Activated B cell treated with CpG ODN at 0.5 μM for 24 hours (primary cell): ENCODE measurements at regions of chr11 and their contacts with region 1.

Region 1: GRCh38 chr11:71977743-71978418 is 20.8 kb upstream of the IL18BP start:
- DNase-seq: no peak
- ATAC-seq: peak; percentile 96
- H3K4me3 Mint-ChIP-seq: no peak overlapping the region
- H3K27ac Mint-ChIP-seq: peak overlapping the region; percentile 91
- H3K4me1 Mint-ChIP-seq: peaks cover 16% of the 10 kb centered on the region
- H3K27me3 Mint-ChIP-seq: no peaks in the 10 kb centered on the region
- CTCF ChIP-seq: peak; percentile 26

Region 2: GRCh38 chr11:71962428-71963038 is 15.3 kb before region 1 on chr11:
- CTCF ChIA-PET with region 1: interaction called, 3 read pairs
- POLR2A ChIA-PET with region 1: no interaction called
- intact Hi-C with region 1: loop called (anchors 2 kb)
- DNase-seq: no peak
- ATAC-seq: peak; percentile 77
- H3K4me3 Mint-ChIP-seq: no peak overlapping the region
- H3K27ac Mint-ChIP-seq: peak overlapping the region; percentile 75
- H3K4me1 Mint-ChIP-seq: peaks cover 19% of the 10 kb centered on the region
- H3K27me3 Mint-ChIP-seq: no peaks in the 10 kb centered on the region
- CTCF ChIP-seq: no peak

Region 3: DNA sequence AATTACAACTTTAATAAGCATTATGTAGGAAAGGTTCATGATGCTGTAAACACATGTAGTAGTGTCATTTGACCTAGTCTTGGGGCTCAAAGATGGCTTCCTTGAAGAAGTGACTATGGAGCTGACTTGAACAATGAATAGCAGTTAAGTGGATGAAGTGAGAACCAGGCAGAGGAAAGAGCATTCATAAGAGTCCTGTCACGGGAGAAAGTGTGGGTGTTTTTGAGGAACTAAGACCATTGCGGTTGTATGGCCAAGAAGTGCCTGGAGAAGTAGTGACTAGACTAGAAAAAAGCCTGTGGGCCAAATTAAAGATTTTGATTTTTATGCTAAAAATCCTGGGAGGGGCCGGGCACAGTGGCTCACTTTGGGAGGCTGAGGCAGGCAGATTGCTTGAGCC is 13.6 kb after region 1 on chr11:
- CTCF ChIA-PET with region 1: interaction called, 9 read pairs
- POLR2A ChIA-PET with region 1: interaction called, 9 read pairs
- intact Hi-C with region 1: loop called (anchors 1 kb)
- DNase-seq: no peak
- ATAC-seq: peak; percentile 82
- H3K4me3 Mint-ChIP-seq: peak overlapping the region; percentile 62
- H3K27ac Mint-ChIP-seq: peak overlapping the region; percentile 82
- H3K4me1 Mint-ChIP-seq: peaks cover 60% of the 10 kb centered on the region
- H3K27me3 Mint-ChIP-seq: no peaks in the 10 kb centered on the region
- CTCF ChIP-seq: no peak

Region 4: GRCh38 chr11:71998662-71999310 is 20.9 kb after region 1 on chr11 and contains the start of gene IL18BP:
- CTCF ChIA-PET with region 1: interaction called, 13 read pairs
- POLR2A ChIA-PET with region 1: interaction called, 8 read pairs
- intact Hi-C with region 1: no loop called
- DNase-seq: peak; percentile 18
- ATAC-seq: peak; percentile 80
- H3K4me3 Mint-ChIP-seq: peak within 1 kb of the TSS; percentile 81
- H3K27ac Mint-ChIP-seq: peak within 1 kb of the TSS; percentile 93
- H3K4me1 Mint-ChIP-seq: peaks cover 47% of the 10 kb centered on the region
- H3K27me3 Mint-ChIP-seq: no peaks in the 10 kb centered on the region
- CTCF ChIP-seq: no peak
- total RNA-seq, gene IL18BP: 26.8 and 27.5 TPM in 2 replicates

Region 5: GRCh38 chr11:72015511-72016171 is 37.8 kb after region 1 on chr11:
- CTCF ChIA-PET with region 1: interaction called, 60 read pairs
- POLR2A ChIA-PET with region 1: interaction called, 5 read pairs
- intact Hi-C with region 1: loop called (anchors 1 kb)
- DNase-seq: no peak
- ATAC-seq: no peak
- H3K4me3 Mint-ChIP-seq: no peak overlapping the region
- H3K27ac Mint-ChIP-seq: peak overlapping the region; percentile 61
- H3K4me1 Mint-ChIP-seq: no peaks in the 10 kb centered on the region
- H3K27me3 Mint-ChIP-seq: no peaks in the 10 kb centered on the region
- CTCF ChIP-seq: no peak

Region 6: DNA sequence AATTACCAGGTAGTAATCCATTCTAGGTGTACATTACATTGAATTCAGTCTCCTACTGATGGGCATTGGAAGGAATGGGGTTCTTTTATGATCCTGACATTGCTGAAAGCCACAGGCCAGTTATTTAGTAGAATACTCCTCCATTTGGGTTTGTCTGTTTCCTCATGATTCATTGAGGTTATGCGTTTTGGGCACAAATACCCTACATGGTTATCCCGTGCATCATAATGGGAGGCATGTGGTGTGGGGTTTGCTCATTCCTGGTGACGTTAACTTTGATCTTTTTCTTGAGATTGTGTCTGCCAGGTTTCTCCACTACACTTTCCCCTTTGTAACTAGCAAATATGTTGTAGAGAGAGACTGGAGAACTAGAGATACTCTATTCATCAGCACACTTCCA is 163.2 kb after region 1 on chr11:
- CTCF ChIA-PET with region 1: interaction called, 44 read pairs
- POLR2A ChIA-PET with region 1: no interaction called
- intact Hi-C with region 1: loop called (anchors 1 kb)
- DNase-seq: no peak
- ATAC-seq: no peak
- H3K4me3 Mint-ChIP-seq: no peak overlapping the region
- H3K27ac Mint-ChIP-seq: no peak overlapping the region
- H3K4me1 Mint-ChIP-seq: peaks cover 1% of the 10 kb centered on the region
- H3K27me3 Mint-ChIP-seq: peaks cover 17% of the 10 kb centered on the region
- CTCF ChIP-seq: no peak